Activated T-helper 1 cell treated with anti-CD3 and anti-CD28 coated beads, Interleukin-12 subunit alpha, Interleukin-12 subunit beta, Interleukin-2, Interleukin-4 antibody, amounts not matched to agents 30 ng/mL and 10 ng/mL and 1 ng/mL, durations not matched to agents 14 hours and 24 hours and 36 hours (primary cell): ENCODE measurements at regions of chr12 and their contacts with region 1.

Region 1: DNA sequence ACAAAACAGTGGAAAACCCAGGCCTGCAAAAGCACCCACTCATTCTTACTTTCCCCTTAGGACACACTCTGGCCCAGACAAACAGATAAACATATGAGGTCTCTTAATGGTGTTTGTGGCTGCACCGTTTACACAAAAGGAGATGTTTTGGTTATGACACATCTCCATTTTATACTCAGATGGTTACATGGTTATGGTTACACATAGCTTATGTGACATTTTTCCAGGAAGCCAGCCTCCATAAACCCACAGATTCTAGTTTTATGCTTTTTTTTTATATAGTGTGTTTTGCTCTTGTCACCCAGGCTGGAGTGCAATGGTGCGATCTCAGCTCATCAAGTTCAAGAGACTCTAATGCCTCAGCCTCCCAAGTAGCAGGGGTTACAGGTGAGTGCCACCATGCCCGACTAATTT is 3.5 kb upstream of the KLRD1 start:
- DNase-seq: peak; percentile 34
- H3K4me3 Mint-ChIP-seq: no peak overlapping the region
- H3K27ac Mint-ChIP-seq: peak overlapping the region; percentile 54
- H3K4me1 Mint-ChIP-seq: peaks cover 51% of the 10 kb centered on the region
- H3K27me3 Mint-ChIP-seq: peaks cover 7% of the 10 kb centered on the region

Region 2: GRCh38 chr12:9732921-9733461 is 571.2 kb before region 1 on chr12 and contains the start of gene CLECL1:
- intact Hi-C with region 1: loop called (anchors 5 kb)
- DNase-seq: no peak
- H3K4me3 Mint-ChIP-seq: peak within 1 kb of the TSS; percentile 87
- H3K27ac Mint-ChIP-seq: peak within 1 kb of the TSS; percentile 89
- H3K4me1 Mint-ChIP-seq: peaks cover 76% of the 10 kb centered on the region
- H3K27me3 Mint-ChIP-seq: no peaks in the 10 kb centered on the region
- total RNA-seq, gene CLECL1: 7.6 and 9.1 TPM in 2 replicates

Region 3: DNA sequence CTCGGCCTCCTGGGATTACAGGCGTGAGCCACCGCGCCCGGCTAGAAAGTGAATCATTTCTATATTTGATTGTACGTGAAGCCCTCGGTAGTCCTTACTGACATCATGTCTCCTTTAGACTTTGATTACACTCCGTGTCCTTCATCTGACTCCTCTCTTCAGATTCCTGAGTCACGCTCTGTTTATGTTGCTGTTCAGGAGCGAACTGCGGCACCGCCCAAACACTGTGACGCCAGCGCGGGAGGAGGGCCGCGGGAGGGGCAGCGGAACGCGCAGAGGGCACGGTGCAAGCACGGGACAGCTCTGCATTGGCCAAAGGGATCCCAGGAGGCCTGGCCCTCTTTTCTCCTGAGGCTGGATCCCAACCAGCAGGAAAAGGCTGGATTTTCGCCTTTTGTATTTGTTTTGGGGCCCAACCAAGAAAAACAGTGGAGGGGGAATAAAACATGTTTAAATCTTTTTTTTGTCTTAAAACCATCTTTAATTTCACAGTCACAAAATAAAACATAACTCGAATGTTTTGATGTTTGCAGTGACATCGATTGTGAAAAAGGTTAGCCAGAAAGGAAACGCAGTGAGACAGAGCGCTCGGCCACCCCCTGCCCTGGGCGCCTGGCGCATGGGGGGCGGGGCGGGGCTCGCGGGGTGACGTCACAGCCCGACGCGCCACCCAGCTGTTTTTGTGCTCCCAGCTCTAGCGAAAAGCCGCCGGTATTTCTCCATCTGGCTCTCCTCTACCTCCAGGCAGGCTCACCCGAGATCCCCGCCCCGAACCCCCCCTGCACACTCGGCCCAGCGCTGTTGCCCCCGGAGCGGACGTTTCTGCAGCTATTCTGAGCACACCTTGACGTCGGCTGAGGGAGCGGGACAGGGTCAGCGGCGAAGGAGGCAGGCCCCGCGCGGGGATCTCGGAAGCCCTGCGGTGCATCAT is 91.7 kb before region 1 on chr12 and contains the start of gene GABARAPL1:
- intact Hi-C with region 1: loop called (anchors 1 kb)
- DNase-seq: peak; percentile 76
- H3K4me3 Mint-ChIP-seq: peak within 1 kb of the TSS; percentile 84
- H3K27ac Mint-ChIP-seq: peak within 1 kb of the TSS; percentile 93
- H3K4me1 Mint-ChIP-seq: peaks cover 32% of the 10 kb centered on the region
- H3K27me3 Mint-ChIP-seq: peaks cover 23% of the 10 kb centered on the region
- total RNA-seq, gene GABARAPL1: 5.0 and 6.6 TPM in 2 replicates

Region 4: DNA sequence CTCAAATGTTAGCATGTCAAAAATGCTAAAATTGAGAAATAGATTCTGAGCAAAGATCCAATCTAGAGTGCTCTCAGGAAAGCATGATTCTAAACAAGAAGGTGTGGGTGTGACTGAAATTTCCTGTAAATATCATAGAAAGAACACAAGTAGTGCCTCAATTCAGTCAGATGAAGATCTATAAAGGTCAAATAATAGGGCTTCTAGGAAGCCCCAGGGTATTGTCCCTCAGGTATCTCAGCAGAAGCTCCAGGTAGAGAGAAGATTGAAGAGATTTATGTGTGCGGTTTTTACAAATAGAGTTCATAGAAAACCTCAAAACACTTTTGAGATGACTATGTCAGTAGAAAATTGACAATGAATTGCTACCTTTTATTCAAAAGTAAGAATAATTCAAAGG is 16.5 kb after region 1 on chr12:
- intact Hi-C with region 1: loop called (anchors 1 kb)
- DNase-seq: no peak
- H3K4me3 Mint-ChIP-seq: no peak overlapping the region
- H3K27ac Mint-ChIP-seq: peak overlapping the region; percentile 26
- H3K4me1 Mint-ChIP-seq: peaks cover 23% of the 10 kb centered on the region
- H3K27me3 Mint-ChIP-seq: peaks cover 13% of the 10 kb centered on the region

Region 5: GRCh38 chr12:10540776-10541205 is 236.6 kb after region 1 on chr12:
- intact Hi-C with region 1: loop called (anchors 1 kb)
- DNase-seq: no peak
- H3K4me3 Mint-ChIP-seq: no peak overlapping the region
- H3K27ac Mint-ChIP-seq: peak overlapping the region; percentile 57
- H3K4me1 Mint-ChIP-seq: peaks cover 12% of the 10 kb centered on the region
- H3K27me3 Mint-ChIP-seq: peaks cover 5% of the 10 kb centered on the region

Region 6: GRCh38 chr12:11040162-11040561 is 736.0 kb after region 1 on chr12:
- intact Hi-C with region 1: no loop called
- DNase-seq: no peak
- H3K4me3 Mint-ChIP-seq: no peak overlapping the region
- H3K27ac Mint-ChIP-seq: no peak overlapping the region
- H3K4me1 Mint-ChIP-seq: peaks cover 4% of the 10 kb centered on the region
- H3K27me3 Mint-ChIP-seq: no peaks in the 10 kb centered on the region